ENCODE measurements at regions of chr18 and their contacts with region 1.

Region 1: DNA sequence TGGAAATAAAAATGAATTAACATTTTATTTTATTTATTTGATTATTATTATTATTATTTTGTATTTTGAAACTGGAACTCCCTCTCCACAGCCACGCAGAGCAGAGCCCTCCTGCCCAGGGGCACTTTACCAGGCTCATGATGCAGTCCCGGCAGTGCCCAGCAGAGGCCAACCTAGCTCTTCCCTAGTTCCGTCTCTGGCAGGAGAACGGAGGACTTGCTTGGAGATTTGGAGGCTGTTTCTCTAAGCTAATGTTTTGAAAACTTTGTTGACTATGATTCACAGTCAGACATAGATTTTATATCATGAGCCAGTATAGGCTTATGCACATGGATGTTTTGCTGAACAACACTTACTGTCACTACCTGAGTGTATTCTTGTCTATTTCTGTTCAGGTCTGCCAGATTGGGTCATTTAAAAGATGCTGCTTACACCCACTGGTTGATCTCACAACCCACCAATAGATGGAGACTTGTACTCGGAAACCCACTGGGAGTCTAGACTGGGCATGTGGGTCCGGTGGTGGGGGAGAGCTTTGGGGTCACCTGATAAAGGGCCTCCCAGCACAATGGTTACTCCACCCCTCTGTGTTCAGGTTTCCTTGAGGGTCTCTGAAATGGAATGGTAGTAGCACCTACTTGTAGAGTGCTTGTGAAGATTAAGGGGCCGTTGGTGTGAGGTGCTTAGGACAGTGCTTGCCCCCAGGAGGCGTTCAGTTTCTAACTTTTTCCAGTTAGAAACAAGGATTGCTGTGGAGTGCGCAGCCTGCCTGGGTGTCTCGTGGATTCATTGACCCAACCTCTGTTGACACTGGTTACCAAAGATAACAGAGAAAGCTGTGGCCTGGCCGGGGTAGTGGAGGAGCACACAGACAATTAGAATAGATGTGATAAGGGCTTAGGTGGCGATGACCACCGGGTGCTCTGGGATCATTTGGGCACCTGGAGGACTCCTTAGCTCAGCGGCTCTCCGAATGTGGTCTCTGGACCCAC is 177.3 kb downstream of the HAUS1 start:
- DNase-seq: no peak
- H3K4me3 ChIP-seq: no peak overlapping the region
- H3K27me3 ChIP-seq: no peaks in the 10 kb centered on the region
- CTCF ChIP-seq: peak; percentile 93

Region 2: DNA sequence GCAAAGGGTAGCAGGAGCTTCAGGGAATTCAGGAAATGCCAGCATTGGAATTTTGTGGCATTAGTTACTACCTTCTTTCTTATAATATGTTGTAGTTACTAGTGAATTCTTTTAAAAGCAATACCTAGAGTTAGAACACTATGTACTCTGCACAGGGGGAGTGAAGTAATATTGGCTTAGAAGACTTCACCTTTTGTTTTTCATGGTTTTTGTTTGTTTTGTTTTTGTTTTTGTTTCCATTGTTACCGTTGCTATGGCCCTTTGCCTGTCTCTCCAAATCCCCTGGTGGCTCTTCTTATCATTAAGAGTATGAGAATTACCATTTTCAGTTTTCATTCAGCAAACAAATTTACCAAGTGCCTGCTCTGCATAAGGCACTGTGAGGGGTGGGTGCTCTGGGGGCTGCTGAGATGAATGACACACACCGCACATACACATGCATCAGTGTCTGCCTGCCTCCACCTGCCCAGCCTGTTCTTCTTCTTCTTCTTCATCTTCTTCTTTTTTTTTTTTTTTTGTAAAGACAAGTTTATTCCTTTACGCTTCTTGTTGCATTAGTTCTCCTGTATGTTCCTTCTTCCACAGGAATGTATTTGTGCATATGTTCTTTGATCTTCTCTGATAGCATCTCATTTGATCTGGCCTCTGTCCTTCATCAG is 17.1 kb before region 1 on chr18:
- CTCF ChIA-PET with region 1: interaction called, 12 read pairs
- POLR2A ChIA-PET with region 1: no interaction called
- DNase-seq: no peak
- H3K4me3 ChIP-seq: no peak overlapping the region
- H3K27me3 ChIP-seq: no peaks in the 10 kb centered on the region
- CTCF ChIP-seq: no peak

Region 3: DNA sequence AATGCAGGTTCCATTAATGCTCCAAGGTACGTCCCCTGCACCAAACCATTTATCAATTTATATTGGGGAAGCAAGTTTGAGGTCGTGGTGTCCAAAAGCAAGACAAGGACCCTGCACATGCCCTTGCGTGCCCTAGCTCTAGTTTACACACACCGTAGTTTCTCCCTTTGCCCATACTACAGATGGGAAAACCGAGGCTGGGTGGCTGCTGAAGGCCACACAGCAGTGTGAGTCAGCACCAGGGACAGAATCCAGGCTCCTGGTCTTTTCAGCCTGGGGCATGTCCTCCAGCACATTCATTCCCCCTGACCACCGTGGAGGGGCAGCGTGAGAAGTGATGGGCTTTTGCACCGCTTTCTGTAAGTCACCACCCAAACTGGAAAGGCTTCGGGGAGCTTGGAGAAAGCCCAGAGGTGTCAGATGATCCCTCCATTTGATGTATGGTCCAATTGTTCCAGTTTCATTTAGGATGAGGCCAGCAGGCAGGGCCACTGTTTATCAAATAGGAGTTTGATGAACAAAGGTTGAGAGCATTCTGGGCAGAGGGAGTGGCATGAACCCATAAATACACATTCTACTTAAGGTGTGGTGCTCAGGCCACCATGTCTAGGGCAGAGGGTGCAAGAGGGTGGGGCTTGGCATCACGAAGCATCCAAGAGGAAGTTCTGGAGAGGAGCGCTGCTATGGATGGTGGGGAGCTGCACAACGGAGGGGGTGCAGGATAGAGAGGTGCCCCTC is 96.8 kb after region 1 on chr18:
- CTCF ChIA-PET with region 1: no interaction called
- POLR2A ChIA-PET with region 1: no interaction called
- DNase-seq: no peak
- H3K4me3 ChIP-seq: no peak overlapping the region
- H3K27me3 ChIP-seq: peaks cover 1% of the 10 kb centered on the region
- CTCF ChIP-seq: no peak

Region 4: DNA sequence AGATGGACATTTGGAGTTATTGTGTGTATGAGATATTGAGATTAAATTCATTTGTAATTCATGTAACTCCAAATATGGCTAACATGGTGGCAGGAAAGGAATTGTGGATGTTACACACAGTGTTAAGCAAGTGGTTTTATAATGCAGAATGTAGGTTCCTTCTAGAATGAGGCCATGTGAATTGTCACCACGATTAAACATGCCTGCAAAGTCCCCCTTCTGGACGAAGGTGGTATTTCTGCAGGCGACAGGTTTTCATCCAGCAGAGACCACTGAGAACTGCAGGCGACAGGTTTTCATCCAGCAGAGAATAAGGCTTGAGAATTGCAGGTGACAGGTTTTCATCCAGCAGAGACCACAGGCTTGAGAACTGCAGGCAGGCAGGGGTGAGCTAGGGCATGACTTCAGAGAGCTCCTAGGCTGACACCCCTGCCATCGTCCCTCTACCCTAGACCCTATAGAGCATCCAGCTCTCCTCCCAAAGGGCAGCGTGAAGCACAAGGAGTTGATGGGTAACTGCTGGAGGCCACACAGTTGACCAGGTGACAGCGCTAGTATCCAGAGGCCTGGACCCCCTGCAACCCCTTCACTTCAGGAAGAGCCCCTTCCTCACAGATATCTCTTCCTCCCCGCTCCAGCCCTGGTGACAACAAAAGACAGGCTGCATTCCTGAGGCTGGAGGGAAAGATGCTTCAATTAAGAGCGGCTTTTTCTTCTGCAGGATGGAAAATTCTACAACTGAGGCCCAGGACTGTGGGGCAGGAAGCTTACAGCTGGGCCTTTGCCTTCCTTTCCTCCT is 199.8 kb after region 1 on chr18:
- CTCF ChIA-PET with region 1: interaction called, 24 read pairs
- POLR2A ChIA-PET with region 1: no interaction called
- DNase-seq: no peak
- H3K4me3 ChIP-seq: no peak overlapping the region
- H3K27me3 ChIP-seq: peaks cover 9% of the 10 kb centered on the region
- CTCF ChIP-seq: peak; percentile 72

Region 5: GRCh38 chr18:46622999-46623398 is 341.5 kb after region 1 on chr18:
- CTCF ChIA-PET with region 1: interaction called, 10 read pairs
- POLR2A ChIA-PET with region 1: no interaction called
- DNase-seq: no peak
- H3K4me3 ChIP-seq: no peak overlapping the region
- H3K27me3 ChIP-seq: no peaks in the 10 kb centered on the region
- CTCF ChIP-seq: no peak

Measured in BJ (cell line).